ENCODE measurements at regions of chr6 and their contacts with region 1.

Region 1: DNA sequence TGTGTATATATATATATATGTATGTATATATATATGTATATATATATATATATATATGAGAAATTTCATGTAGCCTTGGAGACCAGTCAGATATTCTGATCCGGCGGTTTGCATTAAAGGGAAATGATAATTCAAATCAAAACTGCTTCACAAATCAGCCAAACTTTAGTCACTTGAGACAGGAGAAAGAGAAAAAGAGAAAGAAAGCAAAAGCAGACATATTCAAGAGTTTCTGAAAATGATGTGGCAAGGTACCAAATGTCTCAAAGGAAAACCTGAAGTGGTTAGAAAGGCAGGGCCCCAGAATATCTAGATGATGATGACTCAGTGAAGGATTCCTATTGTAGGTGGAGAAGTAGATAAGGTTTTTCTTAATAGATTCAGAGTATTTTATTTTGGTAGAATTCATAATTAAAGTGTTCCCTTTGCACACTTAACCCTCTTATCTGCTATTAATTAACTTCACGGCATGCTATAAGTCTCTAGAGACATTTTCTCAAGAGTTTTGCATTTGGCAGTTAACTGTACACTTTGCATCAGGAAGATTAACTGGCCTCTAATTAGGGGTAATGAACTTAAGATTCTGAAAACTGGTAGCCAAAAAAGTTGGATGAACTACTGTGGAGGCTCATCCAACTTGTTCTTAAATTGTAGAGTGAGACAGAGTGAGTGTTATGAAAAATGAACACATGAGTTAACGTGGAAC is 50.1 kb upstream of the ASF1A start:
- DNase-seq: peak; percentile 34
- ATAC-seq: no peak
- H3K4me3 ChIP-seq: no peak overlapping the region
- H3K27ac ChIP-seq: no peak overlapping the region
- H3K4me1 ChIP-seq: peaks cover 3% of the 10 kb centered on the region; the same call in 1 of the 2 replicates
- H3K27me3 ChIP-seq: no peaks in the 10 kb centered on the region
- CTCF ChIP-seq: no peak
- POLR2A ChIP-seq: no peak
- RAD21 ChIP-seq: no peak

Region 2: DNA sequence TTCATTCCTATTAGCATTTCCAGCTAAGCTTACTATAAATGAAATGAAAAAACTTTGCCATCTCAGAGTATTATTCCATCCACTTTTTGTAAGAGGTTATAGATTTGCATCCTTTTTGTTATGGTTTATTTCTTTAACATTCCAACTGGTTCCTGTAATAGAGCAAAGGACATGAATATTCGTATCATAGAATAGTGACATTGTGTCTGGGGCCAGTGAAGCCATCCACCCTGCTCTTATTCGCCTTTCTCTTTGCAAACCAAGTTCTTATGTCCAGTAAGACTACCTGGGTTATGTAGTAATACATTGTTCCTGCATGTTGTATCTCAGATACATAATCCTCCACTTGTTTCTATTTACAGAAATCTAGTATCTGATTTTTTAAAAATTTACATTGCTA is 1318.2 kb before region 1 on chr6:
- CTCF ChIA-PET with region 1: no interaction called
- POLR2A ChIA-PET with region 1: no interaction called
- dilution Hi-C with region 1: no loop called
- in situ Hi-C with region 1: no loop called
- intact Hi-C with region 1: loop called (anchors 5 kb)
- DNase-seq: no peak
- ATAC-seq: no peak
- H3K4me3 ChIP-seq: no peak overlapping the region
- H3K27ac ChIP-seq: no peak overlapping the region
- H3K4me1 ChIP-seq: peaks cover 6% of the 10 kb centered on the region
- H3K27me3 ChIP-seq: no peaks in the 10 kb centered on the region
- CTCF ChIP-seq: no peak
- POLR2A ChIP-seq: no peak
- RAD21 ChIP-seq: no peak

Region 3: DNA sequence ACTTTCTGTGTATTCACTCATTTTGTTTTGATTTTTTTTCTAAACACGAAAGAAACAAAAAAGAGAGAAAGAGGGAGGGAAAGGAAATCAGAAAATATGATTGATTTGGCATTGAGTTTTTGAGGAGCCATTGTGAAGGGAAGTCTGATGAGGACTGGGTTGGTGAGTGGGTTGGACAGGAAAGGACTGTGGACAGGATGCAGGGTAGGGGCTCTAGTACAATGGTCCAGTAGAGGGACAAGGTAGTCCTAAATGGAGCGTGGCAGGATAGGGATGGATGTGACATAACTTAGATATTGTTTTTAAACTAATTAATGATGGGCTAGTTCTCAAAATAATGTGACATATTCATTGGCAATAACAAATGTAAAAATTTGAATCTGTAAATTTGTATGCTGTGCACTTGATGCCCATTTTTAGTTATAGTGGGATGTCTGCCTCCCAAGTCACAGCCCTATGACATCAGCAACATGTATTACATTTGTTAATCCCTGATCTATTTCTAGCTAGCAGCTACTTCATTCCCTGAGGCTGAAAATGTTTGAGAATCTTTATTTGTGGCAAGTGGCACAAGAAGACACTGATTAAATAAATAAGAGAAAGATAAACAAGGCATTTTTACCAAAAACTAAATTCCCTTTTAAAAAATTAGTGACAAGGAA is 13.9 kb before region 1 on chr6:
- CTCF ChIA-PET with region 1: no interaction called
- POLR2A ChIA-PET with region 1: no interaction called
- dilution Hi-C with region 1: no loop called
- in situ Hi-C with region 1: no loop called
- intact Hi-C with region 1: no loop called
- DNase-seq: no peak
- ATAC-seq: no peak
- H3K4me3 ChIP-seq: no peak overlapping the region
- H3K27ac ChIP-seq: no peak overlapping the region
- H3K4me1 ChIP-seq: no peaks in the 10 kb centered on the region
- H3K27me3 ChIP-seq: no peaks in the 10 kb centered on the region
- CTCF ChIP-seq: no peak
- POLR2A ChIP-seq: no peak
- RAD21 ChIP-seq: no peak

Region 4: GRCh38 chr6:118963003-118963402 is 119.2 kb after region 1 on chr6:
- CTCF ChIA-PET with region 1: no interaction called
- POLR2A ChIA-PET with region 1: no interaction called
- dilution Hi-C with region 1: no loop called
- in situ Hi-C with region 1: no loop called
- intact Hi-C with region 1: no loop called
- DNase-seq: peak; percentile 10
- ATAC-seq: no peak
- H3K4me3 ChIP-seq: no peak overlapping the region
- H3K27ac ChIP-seq: no peak overlapping the region
- H3K4me1 ChIP-seq: no peaks in the 10 kb centered on the region
- H3K27me3 ChIP-seq: peaks cover 2% of the 10 kb centered on the region; the same call in 1 of the 2 replicates
- CTCF ChIP-seq: peak; percentile 33
- POLR2A ChIP-seq: no peak
- RAD21 ChIP-seq: no peak; the same call in 1 of the 2 replicates

Region 5: GRCh38 chr6:119078376-119079282 is 234.8 kb after region 1 on chr6 and contains the start of gene FAM184A:
- CTCF ChIA-PET with region 1: no interaction called
- POLR2A ChIA-PET with region 1: no interaction called
- dilution Hi-C with region 1: no loop called
- in situ Hi-C with region 1: no loop called
- intact Hi-C with region 1: loop called (anchors 5 kb)
- DNase-seq: peak; percentile 48
- ATAC-seq: peak; percentile 87
- H3K4me3 ChIP-seq: peak within 1 kb of the TSS; percentile 48
- H3K27ac ChIP-seq: no peak within 1 kb of the TSS
- H3K4me1 ChIP-seq: no peaks in the 10 kb centered on the region; the same call in 1 of the 2 replicates
- H3K27me3 ChIP-seq: peaks cover 21% of the 10 kb centered on the region
- CTCF ChIP-seq: no peak; the same call in 1 of the 2 replicates
- POLR2A ChIP-seq: no peak
- RAD21 ChIP-seq: no peak
- total RNA-seq, gene FAM184A: not detected in 2 replicates